B cell (primary cell): ENCODE measurements at regions of chr4 and their contacts with region 1.

Region 1: GRCh38 chr4:37826295-37827029 is at the start of gene PGM2:
- DNase-seq: peak; percentile 92
- ATAC-seq: peak; percentile 96
- H3K4me3 ChIP-seq: peak within 1 kb of the TSS; percentile 89 to 100 (median 98)
- H3K4me3 Mint-ChIP-seq: peak within 1 kb of the TSS; percentile 99
- H3K27ac ChIP-seq: peak within 1 kb of the TSS; percentile 76 to 81
- H3K27ac Mint-ChIP-seq: peak within 1 kb of the TSS; percentile 96
- H3K4me1 ChIP-seq: peaks cover 18 to 21% of the 10 kb centered on the region in 2 donors
- H3K4me1 Mint-ChIP-seq: peaks cover 28% of the 10 kb centered on the region
- H3K27me3 ChIP-seq: no peaks in the 10 kb centered on the region
- H3K27me3 Mint-ChIP-seq: no peaks in the 10 kb centered on the region
- CTCF ChIP-seq: no peak
- total RNA-seq, gene PGM2: 19.0 and 20.9 TPM in 2 replicates

Region 2: GRCh38 chr4:37686373-37687193 is 139.9 kb before region 1 on chr4 and contains the start of gene RELL1:
- CTCF ChIA-PET with region 1: no interaction called
- POLR2A ChIA-PET with region 1: no interaction called
- intact Hi-C with region 1: loop called (anchors 1 kb)
- DNase-seq: peak; percentile 96
- ATAC-seq: peak; percentile 85
- H3K4me3 ChIP-seq: peak within 1 kb of the TSS; percentile 66 to 86 (median 81)
- H3K4me3 Mint-ChIP-seq: peak within 1 kb of the TSS; percentile 92
- H3K27ac ChIP-seq: peak within 1 kb of the TSS; percentile 45 to 70
- H3K27ac Mint-ChIP-seq: peak within 1 kb of the TSS; percentile 89
- H3K4me1 ChIP-seq: peaks cover 31% of the 10 kb centered on the region in 2 donors
- H3K4me1 Mint-ChIP-seq: peaks cover 31% of the 10 kb centered on the region
- H3K27me3 ChIP-seq: peaks cover 0 to 12% (median 4%) of the 10 kb centered on the region in 4 experiments
- H3K27me3 Mint-ChIP-seq: peaks cover 12% of the 10 kb centered on the region
- CTCF ChIP-seq: no peak
- total RNA-seq, gene RELL1: 2.7 and 3.2 TPM in 2 replicates

Region 3: DNA sequence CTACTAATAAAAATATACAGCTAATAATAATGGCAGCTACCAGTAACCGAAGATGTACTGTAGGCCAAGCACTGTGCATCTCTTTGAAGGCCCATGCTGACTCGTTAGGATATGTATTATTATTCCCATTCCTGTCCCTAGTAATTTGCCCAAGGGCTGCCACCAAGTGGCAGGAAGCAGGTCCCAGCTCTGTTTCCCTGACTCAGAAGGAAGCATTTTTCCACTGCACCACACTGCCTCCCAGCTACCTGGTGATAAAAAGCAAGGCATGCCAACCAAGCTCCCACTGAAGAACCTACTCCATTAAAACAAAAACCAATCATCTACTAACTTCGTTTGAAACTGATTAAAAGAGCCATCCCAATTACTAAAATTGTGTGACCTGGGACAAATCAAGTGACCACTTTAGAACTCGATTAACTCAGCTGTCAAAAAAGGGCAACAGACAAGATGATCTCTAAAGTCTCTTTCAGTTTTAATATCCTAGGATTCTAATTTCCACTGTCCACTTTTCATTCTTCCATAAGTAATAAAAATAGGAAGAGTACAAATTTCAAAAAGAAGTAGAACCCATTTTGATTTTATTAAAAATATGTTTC is 24.3 kb before region 1 on chr4:
- CTCF ChIA-PET with region 1: interaction called, 6 read pairs
- POLR2A ChIA-PET with region 1: no interaction called
- intact Hi-C with region 1: loop called (anchors 1 kb)
- DNase-seq: no peak
- ATAC-seq: no peak
- H3K4me3 ChIP-seq: no peak overlapping the region
- H3K4me3 Mint-ChIP-seq: no peak overlapping the region
- H3K27ac ChIP-seq: no peak overlapping the region
- H3K27ac Mint-ChIP-seq: no peak overlapping the region
- H3K4me1 ChIP-seq: no peaks in the 10 kb centered on the region
- H3K4me1 Mint-ChIP-seq: peaks cover 3% of the 10 kb centered on the region
- H3K27me3 ChIP-seq: no peaks in the 10 kb centered on the region
- H3K27me3 Mint-ChIP-seq: peaks cover 6% of the 10 kb centered on the region
- CTCF ChIP-seq: no peak

Region 4: GRCh38 chr4:37891260-37892159 is 65.0 kb after region 1 on chr4:
- CTCF ChIA-PET with region 1: interaction called, 3 read pairs
- POLR2A ChIA-PET with region 1: interaction called, 20 read pairs
- intact Hi-C with region 1: loop called (anchors 1 kb)
- DNase-seq: peak; percentile 85
- ATAC-seq: peak; percentile 52
- H3K4me3 ChIP-seq: peak overlapping the region; percentile 72 to 96 (median 72)
- H3K4me3 Mint-ChIP-seq: peak overlapping the region; percentile 91
- H3K27ac ChIP-seq: peak overlapping the region; percentile 92 to 95
- H3K27ac Mint-ChIP-seq: peak overlapping the region; percentile 98
- H3K4me1 ChIP-seq: peaks cover 49 to 50% of the 10 kb centered on the region in 2 donors
- H3K4me1 Mint-ChIP-seq: peaks cover 62% of the 10 kb centered on the region
- H3K27me3 ChIP-seq: no peaks in the 10 kb centered on the region
- H3K27me3 Mint-ChIP-seq: no peaks in the 10 kb centered on the region
- CTCF ChIP-seq: no peak

Region 5: GRCh38 chr4:39181905-39182638 is 1355.6 kb after region 1 on chr4 and contains the start of gene WDR19:
- CTCF ChIA-PET with region 1: no interaction called
- POLR2A ChIA-PET with region 1: no interaction called
- intact Hi-C with region 1: loop called (anchors 2 kb)
- DNase-seq: peak; percentile 99
- ATAC-seq: peak; percentile 96
- H3K4me3 ChIP-seq: peak within 1 kb of the TSS; percentile 76 to 99 (median 94)
- H3K4me3 Mint-ChIP-seq: peak within 1 kb of the TSS; percentile 47
- H3K27ac ChIP-seq: peak within 1 kb of the TSS; percentile 12 to 79
- H3K27ac Mint-ChIP-seq: no peak within 1 kb of the TSS
- H3K4me1 ChIP-seq: peaks cover 12 to 16% of the 10 kb centered on the region in 2 donors
- H3K4me1 Mint-ChIP-seq: peaks cover 8% of the 10 kb centered on the region
- H3K27me3 ChIP-seq: no peaks in the 10 kb centered on the region
- H3K27me3 Mint-ChIP-seq: no peaks in the 10 kb centered on the region
- CTCF ChIP-seq: peak; percentile 73
- total RNA-seq, gene WDR19: 79.8 and 83.2 TPM in 2 replicates